Activated CD8-positive, alpha-beta T cell treated with anti-CD3 and anti-CD28 coated beads for 36 hours (primary cell): ENCODE measurements at regions of chr16 and their contacts with region 1.

Region 1: GRCh38 chr16:11851294-11852091 is at the start of gene RSL1D1:
- DNase-seq: peak; percentile 92
- ATAC-seq: peak; percentile 87
- H3K4me3 Mint-ChIP-seq: peak within 1 kb of the TSS; percentile 96
- H3K27ac Mint-ChIP-seq: peak within 1 kb of the TSS; percentile 95
- H3K4me1 Mint-ChIP-seq: peaks cover 47% of the 10 kb centered on the region
- H3K27me3 Mint-ChIP-seq: no peaks in the 10 kb centered on the region
- CTCF ChIP-seq: no peak
- total RNA-seq, gene RSL1D1: 344 TPM

Region 2: GRCh38 chr16:11788914-11789313 is 62.6 kb before region 1 on chr16:
- CTCF ChIA-PET with region 1: no interaction called
- POLR2A ChIA-PET with region 1: no interaction called
- intact Hi-C with region 1: no loop called
- DNase-seq: no peak
- ATAC-seq: peak; percentile 22
- H3K4me3 Mint-ChIP-seq: no peak overlapping the region
- H3K27ac Mint-ChIP-seq: peak overlapping the region; percentile 48
- H3K4me1 Mint-ChIP-seq: peaks cover 73% of the 10 kb centered on the region
- H3K27me3 Mint-ChIP-seq: no peaks in the 10 kb centered on the region
- CTCF ChIP-seq: no peak

Region 3: DNA sequence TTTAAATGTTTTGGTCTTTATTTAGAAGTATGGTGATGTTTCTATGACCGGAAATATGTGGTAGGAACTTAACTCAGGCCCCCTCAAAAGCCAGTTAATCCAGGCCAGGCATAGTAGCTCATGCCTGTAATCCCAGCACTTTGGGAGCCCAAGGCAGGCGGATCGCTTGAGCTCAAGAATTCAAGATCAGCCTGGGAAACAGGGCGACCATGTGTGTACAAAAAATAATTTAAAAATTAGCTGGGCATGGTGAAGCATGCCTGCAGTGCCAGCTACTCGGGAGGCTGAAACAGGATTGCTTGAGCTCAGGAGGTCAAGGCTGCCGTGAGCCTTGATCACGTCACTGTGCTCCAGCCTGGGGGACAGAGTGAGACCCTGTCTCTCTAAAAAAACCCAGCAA is 10.5 kb before region 1 on chr16:
- CTCF ChIA-PET with region 1: no interaction called
- POLR2A ChIA-PET with region 1: interaction called, 21 read pairs
- intact Hi-C with region 1: no loop called
- DNase-seq: no peak
- ATAC-seq: no peak
- H3K4me3 Mint-ChIP-seq: no peak overlapping the region
- H3K27ac Mint-ChIP-seq: no peak overlapping the region
- H3K4me1 Mint-ChIP-seq: peaks cover 12% of the 10 kb centered on the region
- H3K27me3 Mint-ChIP-seq: no peaks in the 10 kb centered on the region
- CTCF ChIP-seq: no peak

Region 4: DNA sequence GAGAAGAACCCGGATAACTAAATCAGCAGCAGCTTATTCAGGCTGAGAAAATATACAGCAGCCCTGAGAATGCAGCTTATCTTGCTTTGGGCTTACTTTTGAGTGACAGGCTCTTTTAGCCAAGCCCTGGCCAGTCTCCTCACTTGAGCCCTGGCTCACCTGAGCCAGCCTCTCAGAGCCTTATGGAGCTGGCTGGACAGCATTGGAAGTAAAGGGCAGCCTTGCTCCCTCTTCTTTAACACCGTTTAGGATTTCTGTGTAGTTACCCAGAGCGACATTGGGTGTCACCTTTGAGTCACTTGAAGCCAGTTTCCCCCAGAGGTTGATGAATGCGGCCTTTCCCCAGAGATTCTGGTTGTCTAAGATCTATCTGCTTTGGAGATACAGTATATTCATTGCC is 98.0 kb after region 1 on chr16:
- CTCF ChIA-PET with region 1: no interaction called
- POLR2A ChIA-PET with region 1: no interaction called
- intact Hi-C with region 1: no loop called
- DNase-seq: peak; percentile 36
- ATAC-seq: peak; percentile 70
- H3K4me3 Mint-ChIP-seq: no peak overlapping the region
- H3K27ac Mint-ChIP-seq: no peak overlapping the region
- H3K4me1 Mint-ChIP-seq: no peaks in the 10 kb centered on the region
- H3K27me3 Mint-ChIP-seq: no peaks in the 10 kb centered on the region
- CTCF ChIP-seq: peak; percentile 49